AG04449 (cell line): ENCODE measurements at regions of chr1 and their contacts with region 1.

Region 1: GRCh38 chr1:107142140-107142542 is 1.3 kb downstream of the NTNG1 start:
- DNase-seq: no peak
- H3K4me3 ChIP-seq: peak overlapping the region; percentile 62
- CTCF ChIP-seq: peak; percentile 23

Region 2: DNA sequence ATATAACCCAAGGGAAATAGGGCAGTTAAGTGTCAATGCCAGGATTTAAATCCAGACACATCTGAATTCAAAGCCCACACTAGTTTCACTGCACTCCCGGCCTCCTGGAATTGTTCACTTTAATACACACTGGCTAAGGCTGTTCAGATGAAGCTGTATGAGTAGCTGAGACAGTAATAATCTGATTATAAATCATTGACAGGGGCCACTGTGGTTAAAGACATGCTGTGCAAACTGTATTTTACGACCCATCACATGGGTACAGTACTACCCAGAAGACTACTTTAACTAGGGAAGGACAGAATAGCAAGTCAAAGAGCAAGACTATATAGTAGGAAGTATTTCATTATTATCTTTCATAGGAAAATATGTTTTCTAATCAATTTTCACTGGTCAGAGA is 17.4 kb before region 1 on chr1:
- CTCF ChIA-PET with region 1: no interaction called
- POLR2A ChIA-PET with region 1: no interaction called
- DNase-seq: no peak
- H3K4me3 ChIP-seq: no peak overlapping the region
- CTCF ChIP-seq: no peak

Region 3: DNA sequence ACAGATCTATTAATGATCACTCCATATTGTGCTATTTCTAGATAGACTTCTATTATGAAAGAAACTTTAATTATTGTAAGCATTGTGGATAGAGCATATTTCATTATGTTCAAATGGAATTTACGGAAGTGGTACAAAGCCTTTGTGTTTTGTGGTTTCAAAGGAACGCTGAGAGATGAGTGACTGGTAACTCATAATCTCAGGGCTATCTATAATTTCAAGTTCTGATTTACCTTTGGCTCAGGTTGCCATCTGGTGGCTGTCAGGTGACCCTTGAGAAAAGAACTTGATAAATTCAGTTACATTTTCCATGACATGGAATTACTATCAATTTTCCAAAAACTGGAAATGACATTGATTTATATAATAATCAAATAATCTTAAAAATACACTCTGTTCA is 10.9 kb after region 1 on chr1:
- CTCF ChIA-PET with region 1: interaction called, 10 read pairs
- POLR2A ChIA-PET with region 1: interaction called, 4 read pairs
- DNase-seq: no peak
- H3K4me3 ChIP-seq: no peak overlapping the region
- CTCF ChIP-seq: no peak

Region 4: GRCh38 chr1:107158991-107159390 is 16.9 kb after region 1 on chr1:
- CTCF ChIA-PET with region 1: interaction called, 11 read pairs
- POLR2A ChIA-PET with region 1: interaction called, 4 read pairs
- DNase-seq: no peak
- H3K4me3 ChIP-seq: no peak overlapping the region
- CTCF ChIP-seq: no peak